ENCODE measurements at regions of chr12 and their contacts with region 1.

Region 1: DNA sequence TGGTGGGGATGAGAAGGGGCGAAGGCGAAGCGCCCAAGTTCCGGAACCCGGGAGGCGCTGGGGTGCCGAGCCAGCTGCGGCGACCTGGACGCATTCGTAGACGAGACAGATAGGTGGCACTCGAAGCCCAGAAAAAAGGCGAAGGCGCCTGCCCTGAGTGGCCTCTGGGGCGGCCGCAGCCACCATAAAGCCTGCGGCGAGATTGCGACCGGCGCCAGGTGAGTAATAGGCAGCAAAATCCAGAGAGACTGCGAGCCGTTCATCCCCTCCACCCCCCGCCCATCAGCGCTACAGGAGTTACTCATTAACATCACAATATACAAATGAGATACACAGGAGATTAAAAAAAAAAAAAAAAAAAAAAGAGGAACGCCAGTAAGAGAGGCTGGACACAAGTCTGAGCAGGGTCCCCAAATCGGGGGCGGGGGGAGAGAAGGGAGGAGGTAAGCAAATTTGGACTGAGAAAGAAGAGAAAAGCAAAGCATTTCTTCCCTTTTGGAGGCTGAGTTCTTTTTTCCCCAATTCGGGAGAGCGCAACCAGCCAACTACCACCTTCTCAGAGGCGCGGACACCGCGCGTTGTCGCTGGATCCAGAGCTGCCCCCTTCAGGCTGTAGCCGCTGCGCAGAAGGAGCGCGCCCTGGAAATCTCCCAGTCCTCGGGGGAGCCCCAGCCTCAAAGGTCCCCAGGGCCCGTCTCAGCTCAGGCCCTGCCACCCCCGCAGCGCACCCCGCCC is 15.7 kb downstream of the TBX3 start:
- DNase-seq: peak; percentile 58
- H3K4me3 Mint-ChIP-seq: no peak overlapping the region
- H3K27ac Mint-ChIP-seq: peak overlapping the region; percentile 63
- H3K4me1 Mint-ChIP-seq: no peaks in the 10 kb centered on the region
- H3K27me3 Mint-ChIP-seq: peaks cover 71% of the 10 kb centered on the region

Region 2: GRCh38 chr12:114684098-114684869 is 16.0 kb after region 1 on chr12 and contains the start of gene TBX3:
- intact Hi-C with region 1: loop called (anchors 2 kb)
- DNase-seq: peak; percentile 73
- H3K4me3 Mint-ChIP-seq: peak within 1 kb of the TSS; percentile 57
- H3K27ac Mint-ChIP-seq: peak within 1 kb of the TSS; percentile 81
- H3K4me1 Mint-ChIP-seq: peaks cover 10% of the 10 kb centered on the region
- H3K27me3 Mint-ChIP-seq: peaks cover 91% of the 10 kb centered on the region
- total RNA-seq, gene TBX3: not detected in 2 replicates

Region 3: DNA sequence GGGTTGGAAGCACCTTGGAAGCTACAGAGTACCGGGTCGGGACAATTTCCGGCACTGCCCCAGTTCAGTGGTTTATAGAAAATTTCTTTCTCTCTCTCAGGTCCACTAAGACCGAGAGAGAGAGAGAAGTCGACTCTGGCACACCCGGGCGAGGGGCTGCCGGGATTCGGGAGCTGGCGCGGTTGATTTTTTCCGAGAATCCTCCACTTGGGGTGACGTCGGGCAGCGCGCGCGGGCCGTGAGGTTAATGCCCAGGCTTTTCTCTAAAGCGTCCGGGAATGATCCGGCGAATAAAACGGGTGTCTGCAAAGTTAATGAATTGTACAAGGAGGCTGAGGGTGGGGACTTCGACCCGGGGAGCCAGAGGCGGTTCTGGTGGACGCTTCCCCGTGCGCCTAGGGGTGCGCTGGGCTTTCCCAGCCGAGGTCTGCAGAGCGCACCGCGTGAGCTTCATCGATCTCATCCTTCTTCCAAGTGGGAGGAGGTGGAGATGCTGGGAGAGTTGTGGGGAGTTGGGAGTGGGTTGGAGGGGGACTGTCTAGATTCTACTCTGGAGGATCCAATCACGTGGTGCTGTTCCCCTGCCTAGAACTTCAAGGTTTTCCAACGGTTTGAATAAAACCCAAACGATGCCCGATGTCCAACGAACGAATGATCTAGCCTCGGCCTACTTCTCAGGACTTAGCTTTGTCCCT is 67.5 kb after region 1 on chr12:
- intact Hi-C with region 1: loop called (anchors 5 kb)
- DNase-seq: no peak
- H3K4me3 Mint-ChIP-seq: no peak overlapping the region
- H3K27ac Mint-ChIP-seq: no peak overlapping the region
- H3K4me1 Mint-ChIP-seq: no peaks in the 10 kb centered on the region
- H3K27me3 Mint-ChIP-seq: peaks cover 23% of the 10 kb centered on the region

Measured in activated CD4-positive, alpha-beta T cell treated with anti-CD3 and anti-CD28 coated beads, Interleukin-2, amount 10 ng/mL, durations not matched to agents 24 days and 14 days (primary cell).